Activated B cell treated with CpG ODN at 0.5 μM for 24 hours (primary cell): ENCODE measurements at regions of chr17 and their contacts with region 1.

Region 1: GRCh38 chr17:42577532-42578281 is at the start of gene PSMC3IP:
- DNase-seq: peak; percentile 86
- ATAC-seq: peak; percentile 90
- H3K4me3 Mint-ChIP-seq: peak within 1 kb of the TSS; percentile 95
- H3K27ac Mint-ChIP-seq: peak within 1 kb of the TSS; percentile 97
- H3K4me1 Mint-ChIP-seq: peaks cover 38% of the 10 kb centered on the region
- H3K27me3 Mint-ChIP-seq: no peaks in the 10 kb centered on the region
- CTCF ChIP-seq: no peak
- total RNA-seq, gene PSMC3IP: 9.0 and 10.8 TPM in 2 replicates

Region 2: DNA sequence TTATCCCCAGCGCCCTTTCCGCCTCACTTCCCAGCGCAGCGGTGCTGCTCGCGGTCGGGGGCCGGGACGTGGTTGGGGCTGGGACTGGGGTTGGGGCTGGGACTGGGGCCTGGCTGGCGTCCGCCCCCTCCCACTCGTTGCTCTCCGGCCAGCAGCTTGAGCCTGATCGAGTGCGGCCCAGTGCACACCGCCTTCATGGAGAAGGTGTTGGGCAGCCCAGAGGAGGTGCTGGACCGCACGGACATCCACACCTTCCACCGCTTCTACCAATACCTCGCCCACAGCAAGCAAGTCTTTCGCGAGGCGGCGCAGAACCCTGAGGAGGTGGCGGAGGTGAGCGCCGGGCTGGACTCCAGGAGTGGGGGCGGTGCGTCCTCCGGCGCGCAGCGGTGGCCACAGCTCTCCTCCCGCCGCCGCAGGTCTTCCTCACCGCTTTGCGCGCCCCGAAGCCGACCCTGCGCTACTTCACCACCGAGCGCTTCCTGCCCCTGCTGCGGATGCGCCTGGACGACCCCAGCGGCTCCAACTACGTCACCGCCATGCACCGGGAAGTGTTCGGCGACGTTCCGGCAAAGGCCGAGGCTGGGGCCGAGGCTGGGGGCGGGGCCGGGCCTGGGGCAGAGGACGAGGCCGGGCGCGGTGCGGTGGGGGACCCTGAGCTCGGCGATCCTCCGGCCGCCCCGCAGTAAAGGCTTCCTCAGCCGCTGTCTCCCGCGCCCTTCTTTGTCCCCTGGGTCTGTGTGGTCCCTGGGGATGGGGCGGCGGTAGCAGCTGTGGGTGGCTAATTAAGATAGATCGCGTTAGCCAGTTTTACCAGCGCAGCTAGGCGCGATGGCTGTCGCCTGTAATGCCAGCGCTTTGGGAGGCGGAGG is 23.2 kb before region 1 on chr17:
- CTCF ChIA-PET with region 1: interaction called, 11 read pairs
- POLR2A ChIA-PET with region 1: interaction called, 29 read pairs
- intact Hi-C with region 1: loop called (anchors 1 kb)
- DNase-seq: peak; percentile 88
- ATAC-seq: peak; percentile 89
- H3K4me3 Mint-ChIP-seq: peak overlapping the region; percentile 93
- H3K27ac Mint-ChIP-seq: peak overlapping the region; percentile 93
- H3K4me1 Mint-ChIP-seq: peaks cover 27% of the 10 kb centered on the region
- H3K27me3 Mint-ChIP-seq: no peaks in the 10 kb centered on the region
- CTCF ChIP-seq: no peak

Region 3: GRCh38 chr17:42609182-42609813 is 31.6 kb after region 1 on chr17 and contains the starts of genes RETREG3 and TUBG1:
- CTCF ChIA-PET with region 1: interaction called, 32 read pairs
- POLR2A ChIA-PET with region 1: interaction called, 35 read pairs
- intact Hi-C with region 1: loop called (anchors 1 kb)
- DNase-seq: peak; percentile 98
- ATAC-seq: peak; percentile 90
- H3K4me3 Mint-ChIP-seq: peak within 1 kb of the TSS; percentile 100
- H3K27ac Mint-ChIP-seq: peak within 1 kb of the TSS; percentile 98
- H3K4me1 Mint-ChIP-seq: peaks cover 47% of the 10 kb centered on the region
- H3K27me3 Mint-ChIP-seq: no peaks in the 10 kb centered on the region
- CTCF ChIP-seq: no peak
- total RNA-seq, gene RETREG3: 60.0 and 63.5 TPM in 2 replicates
- total RNA-seq, gene TUBG1: 25.0 and 26.8 TPM in 2 replicates

Region 4: DNA sequence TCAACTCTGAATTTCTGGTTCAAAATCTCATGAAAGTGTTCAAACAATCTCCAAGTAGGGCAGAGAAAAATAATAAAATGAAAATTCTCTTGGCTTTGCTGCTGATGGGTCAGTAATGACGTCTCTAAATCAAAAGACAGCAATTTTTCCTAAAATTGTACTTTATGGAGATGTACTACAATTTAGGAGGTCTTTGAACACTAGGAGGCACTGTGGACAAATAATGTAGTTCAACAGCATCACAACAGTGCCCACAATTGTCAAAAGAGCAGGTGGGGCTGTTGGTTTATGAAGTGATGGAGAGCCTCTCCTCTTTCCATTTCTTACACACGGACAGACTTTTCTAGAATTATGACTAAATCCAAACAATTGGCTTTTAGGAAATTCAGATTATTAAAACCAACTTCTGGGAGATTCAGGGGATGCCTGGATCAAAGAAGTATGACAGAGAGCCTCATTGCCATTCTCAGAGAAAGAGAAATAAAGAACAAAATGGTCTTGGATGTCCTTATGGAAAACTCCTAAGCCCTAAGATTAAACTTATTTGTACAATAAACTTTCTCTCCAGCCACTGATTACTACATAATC is 143.4 kb after region 1 on chr17:
- CTCF ChIA-PET with region 1: interaction called, 10 read pairs
- POLR2A ChIA-PET with region 1: no interaction called
- intact Hi-C with region 1: loop called (anchors 1 kb)
- DNase-seq: no peak
- ATAC-seq: peak; percentile 73
- H3K4me3 Mint-ChIP-seq: no peak overlapping the region
- H3K27ac Mint-ChIP-seq: peak overlapping the region; percentile 20
- H3K4me1 Mint-ChIP-seq: peaks cover 2% of the 10 kb centered on the region
- H3K27me3 Mint-ChIP-seq: no peaks in the 10 kb centered on the region
- CTCF ChIP-seq: no peak

Region 5: DNA sequence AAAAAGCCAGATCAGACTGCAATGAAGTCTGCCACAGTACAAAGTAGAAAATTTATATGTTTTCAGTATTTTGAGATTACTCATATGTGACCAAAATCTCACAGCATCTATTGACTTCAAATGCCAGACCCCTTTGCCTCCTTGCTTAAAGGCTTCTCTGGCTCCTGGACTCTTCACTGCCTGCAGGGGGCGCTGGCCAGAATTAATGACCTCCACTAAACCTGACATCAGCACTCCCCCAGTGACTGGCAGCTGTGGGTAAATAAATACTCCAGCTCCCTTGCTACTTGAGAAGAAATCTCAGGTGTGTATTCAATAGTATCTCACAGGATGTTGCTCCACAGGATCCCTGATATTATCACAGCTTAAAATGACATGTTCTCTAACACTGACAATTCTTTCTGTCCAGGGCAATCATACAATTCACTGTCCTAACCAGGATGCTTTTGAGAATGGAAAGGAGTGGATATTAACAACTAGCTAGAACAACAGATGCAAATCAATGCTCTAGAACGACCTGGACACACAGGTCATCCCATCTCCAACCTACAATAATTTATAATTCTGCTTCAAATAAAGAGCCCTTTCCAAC is 242.3 kb after region 1 on chr17:
- CTCF ChIA-PET with region 1: interaction called, 17 read pairs
- POLR2A ChIA-PET with region 1: interaction called, 14 read pairs
- intact Hi-C with region 1: loop called (anchors 1 kb)
- DNase-seq: peak; percentile 43
- ATAC-seq: peak; percentile 20
- H3K4me3 Mint-ChIP-seq: peak overlapping the region; percentile 28
- H3K27ac Mint-ChIP-seq: no peak overlapping the region
- H3K4me1 Mint-ChIP-seq: peaks cover 21% of the 10 kb centered on the region
- H3K27me3 Mint-ChIP-seq: no peaks in the 10 kb centered on the region
- CTCF ChIP-seq: no peak